MCF 10A (cell line): ENCODE measurements at regions of chr13 and their contacts with region 1.

Region 1: DNA sequence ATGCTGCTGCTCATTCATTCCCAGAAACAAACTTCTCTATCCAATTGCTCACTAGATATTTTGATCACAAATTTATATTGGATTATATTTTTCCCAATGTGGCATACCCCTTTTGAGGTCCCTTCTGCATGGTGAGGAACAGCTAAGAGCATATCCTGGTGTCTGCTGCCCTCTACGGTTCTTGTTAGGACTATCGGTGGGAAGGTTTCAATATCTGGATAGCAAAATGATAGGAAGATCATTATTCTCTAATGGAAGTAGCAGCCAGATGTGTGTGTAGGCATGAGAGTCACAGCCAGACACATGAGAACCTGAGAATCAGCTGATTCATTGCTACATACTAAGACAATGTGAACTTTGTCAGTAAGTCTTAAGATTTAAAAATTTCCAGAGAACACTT is 1422.4 kb upstream of the MIR17HG start:
- DNase-seq: peak; percentile 61
- H3K4me3 Mint-ChIP-seq: no peak overlapping the region
- H3K27ac Mint-ChIP-seq: no peak overlapping the region
- H3K4me1 Mint-ChIP-seq: peaks cover 8% of the 10 kb centered on the region
- H3K27me3 Mint-ChIP-seq: no peaks in the 10 kb centered on the region
- CTCF ChIP-seq: peak; percentile 44

Region 2: DNA sequence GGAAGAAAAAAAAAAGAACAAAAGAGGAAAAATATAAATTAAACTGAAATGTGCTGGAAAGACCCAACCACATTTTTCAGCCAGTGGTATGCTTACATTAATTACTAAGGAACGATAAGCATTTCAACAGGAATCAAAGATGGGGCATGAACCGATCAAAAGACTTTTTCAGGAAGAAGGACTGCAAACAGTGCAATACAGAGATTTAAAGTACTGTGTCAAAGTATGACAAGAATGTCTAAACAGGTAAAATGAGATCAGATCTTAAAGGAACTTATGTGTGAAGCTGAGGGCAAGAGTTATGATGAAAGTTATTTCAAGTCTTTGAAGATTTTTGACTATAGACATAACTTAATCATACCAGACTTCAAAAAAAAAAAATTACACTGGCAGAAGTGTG is 492.1 kb before region 1 on chr13:
- CTCF ChIA-PET with region 1: no interaction called
- POLR2A ChIA-PET with region 1: no interaction called
- intact Hi-C with region 1: loop called (anchors 2 kb)
- DNase-seq: no peak
- H3K4me3 Mint-ChIP-seq: no peak overlapping the region
- H3K27ac Mint-ChIP-seq: no peak overlapping the region
- H3K4me1 Mint-ChIP-seq: no peaks in the 10 kb centered on the region
- H3K27me3 Mint-ChIP-seq: no peaks in the 10 kb centered on the region
- CTCF ChIP-seq: no peak

Region 3: GRCh38 chr13:89584058-89584620 is 341.0 kb before region 1 on chr13:
- CTCF ChIA-PET with region 1: no interaction called
- POLR2A ChIA-PET with region 1: no interaction called
- intact Hi-C with region 1: loop called (anchors 10 kb)
- DNase-seq: no peak
- H3K4me3 Mint-ChIP-seq: no peak overlapping the region
- H3K27ac Mint-ChIP-seq: no peak overlapping the region
- H3K4me1 Mint-ChIP-seq: no peaks in the 10 kb centered on the region
- H3K27me3 Mint-ChIP-seq: no peaks in the 10 kb centered on the region
- CTCF ChIP-seq: no peak

Region 4: DNA sequence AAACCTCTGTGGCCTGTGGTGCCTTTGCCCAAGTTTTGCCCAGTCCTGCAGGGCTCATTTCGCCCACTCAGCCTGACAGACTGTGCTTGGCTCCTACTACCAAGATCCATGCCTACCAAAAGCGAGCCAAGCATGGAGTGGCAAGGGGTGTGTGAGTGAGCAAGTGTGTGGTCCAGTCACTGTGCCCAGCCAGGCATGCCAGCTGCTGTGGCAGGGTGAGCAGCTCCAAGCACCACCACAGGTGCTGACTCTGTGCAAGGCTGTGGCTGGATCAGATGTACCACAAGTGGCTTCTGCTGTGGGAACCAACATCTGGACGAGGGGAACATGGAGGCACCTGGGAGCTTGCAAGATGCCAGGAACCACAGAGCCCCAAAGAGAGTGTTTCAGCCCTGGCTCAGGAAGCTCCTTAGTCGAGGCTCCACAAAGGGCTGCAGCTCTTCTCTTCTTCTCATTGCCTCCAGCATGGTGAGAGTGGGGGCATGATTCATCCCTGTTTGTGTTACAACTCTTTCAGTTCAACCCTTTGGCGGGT is 141.8 kb before region 1 on chr13:
- CTCF ChIA-PET with region 1: no interaction called
- POLR2A ChIA-PET with region 1: no interaction called
- intact Hi-C with region 1: no loop called
- DNase-seq: no peak
- H3K4me3 Mint-ChIP-seq: no peak overlapping the region
- H3K27ac Mint-ChIP-seq: no peak overlapping the region
- H3K4me1 Mint-ChIP-seq: no peaks in the 10 kb centered on the region
- H3K27me3 Mint-ChIP-seq: no peaks in the 10 kb centered on the region
- CTCF ChIP-seq: no peak

Region 5: DNA sequence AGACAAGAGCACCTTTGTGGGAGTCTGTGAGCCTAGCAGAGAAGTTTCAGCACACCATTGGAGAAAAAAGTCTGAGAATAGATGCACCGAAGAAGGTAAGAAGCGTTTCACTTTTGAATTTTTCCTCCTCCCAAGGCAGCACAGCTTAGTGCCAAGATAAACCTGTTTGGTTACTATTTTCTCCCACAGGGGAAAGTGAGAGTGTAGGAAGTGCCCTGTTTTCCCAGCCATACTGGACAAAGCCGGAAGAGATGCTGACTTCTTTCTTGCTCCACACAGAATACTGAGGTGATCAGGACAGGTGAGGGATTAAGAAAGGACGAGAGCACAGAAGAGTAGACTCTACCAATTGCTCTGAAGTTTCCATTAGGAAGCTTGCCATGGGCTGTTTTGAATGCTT is 411.4 kb after region 1 on chr13:
- CTCF ChIA-PET with region 1: no interaction called
- POLR2A ChIA-PET with region 1: no interaction called
- intact Hi-C with region 1: no loop called
- DNase-seq: no peak
- H3K4me3 Mint-ChIP-seq: no peak overlapping the region
- H3K27ac Mint-ChIP-seq: no peak overlapping the region
- H3K4me1 Mint-ChIP-seq: no peaks in the 10 kb centered on the region
- H3K27me3 Mint-ChIP-seq: no peaks in the 10 kb centered on the region
- CTCF ChIP-seq: no peak